ENCODE measurements at regions of chr6 and their contacts with region 1.

Region 1: DNA sequence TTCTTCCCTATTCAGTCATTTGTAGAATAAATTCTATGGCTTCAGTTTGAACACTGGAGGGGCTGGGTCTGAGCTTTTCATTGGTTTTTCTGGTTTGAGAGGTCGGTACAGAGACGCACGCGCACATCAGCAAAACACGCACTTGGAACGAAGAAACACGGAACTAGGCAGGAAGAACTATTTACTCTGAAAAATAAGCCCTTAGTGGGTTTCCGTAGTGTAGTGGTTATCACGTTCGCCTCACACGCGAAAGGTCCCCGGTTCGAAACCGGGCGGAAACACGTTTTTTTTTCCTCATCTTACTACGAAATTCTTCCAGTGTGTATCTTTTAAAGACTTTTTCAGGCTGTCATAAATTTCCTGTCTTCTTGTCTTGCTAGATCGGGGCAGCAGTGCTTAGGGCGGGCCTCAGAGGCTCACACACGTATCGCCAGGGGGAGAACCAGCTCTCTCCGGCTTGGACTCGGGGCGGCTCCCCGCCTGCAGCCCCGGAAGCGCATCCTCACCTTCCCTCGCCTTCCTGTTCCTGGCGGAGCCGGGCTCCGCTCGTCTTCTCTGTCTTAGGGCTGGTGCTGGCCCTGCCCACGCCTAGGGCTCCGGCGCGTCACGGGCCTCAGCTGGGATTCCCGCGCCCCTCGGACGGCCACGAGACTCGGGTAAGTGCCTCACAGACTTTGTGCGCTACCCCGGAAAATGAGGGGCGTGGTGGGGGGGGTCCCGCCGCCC is at the start of gene HMGN4:
- DNase-seq: peak; percentile 66 to 97 (median 76)
- ATAC-seq: peak; percentile 70
- H3K4me3 ChIP-seq: peak within 1 kb of the TSS; percentile 93
- H3K4me3 Mint-ChIP-seq: peak within 1 kb of the TSS; percentile 94
- H3K27ac ChIP-seq: peak within 1 kb of the TSS; percentile 84 to 91
- H3K27ac Mint-ChIP-seq: peak within 1 kb of the TSS; percentile 98
- H3K4me1 ChIP-seq: peaks cover 51% of the 10 kb centered on the region
- H3K4me1 Mint-ChIP-seq: peaks cover 57% of the 10 kb centered on the region
- H3K27me3 ChIP-seq: no peaks in the 10 kb centered on the region
- H3K27me3 Mint-ChIP-seq: peaks cover 13% of the 10 kb centered on the region
- CTCF ChIP-seq: no peak
- total RNA-seq, gene HMGN4: 22.7 to 24.8 TPM

Region 2: GRCh38 chr6:26223650-26224546 is 314.1 kb before region 1 on chr6:
- CTCF ChIA-PET with region 1: no interaction called
- POLR2A ChIA-PET with region 1: interaction called, 11 read pairs
- intact Hi-C with region 1: no loop called
- DNase-seq: peak in 13 of 14 experiments; percentile 45 to 93 (median 60)
- ATAC-seq: peak; percentile 87
- H3K4me3 ChIP-seq: peak overlapping the region; percentile 68
- H3K4me3 Mint-ChIP-seq: no peak overlapping the region
- H3K27ac ChIP-seq: peak overlapping the region; percentile 72 to 82
- H3K27ac Mint-ChIP-seq: no peak overlapping the region
- H3K4me1 ChIP-seq: peaks cover 18% of the 10 kb centered on the region
- H3K4me1 Mint-ChIP-seq: peaks cover 5% of the 10 kb centered on the region
- H3K27me3 ChIP-seq: no peaks in the 10 kb centered on the region
- H3K27me3 Mint-ChIP-seq: no peaks in the 10 kb centered on the region
- CTCF ChIP-seq: no peak

Region 3: DNA sequence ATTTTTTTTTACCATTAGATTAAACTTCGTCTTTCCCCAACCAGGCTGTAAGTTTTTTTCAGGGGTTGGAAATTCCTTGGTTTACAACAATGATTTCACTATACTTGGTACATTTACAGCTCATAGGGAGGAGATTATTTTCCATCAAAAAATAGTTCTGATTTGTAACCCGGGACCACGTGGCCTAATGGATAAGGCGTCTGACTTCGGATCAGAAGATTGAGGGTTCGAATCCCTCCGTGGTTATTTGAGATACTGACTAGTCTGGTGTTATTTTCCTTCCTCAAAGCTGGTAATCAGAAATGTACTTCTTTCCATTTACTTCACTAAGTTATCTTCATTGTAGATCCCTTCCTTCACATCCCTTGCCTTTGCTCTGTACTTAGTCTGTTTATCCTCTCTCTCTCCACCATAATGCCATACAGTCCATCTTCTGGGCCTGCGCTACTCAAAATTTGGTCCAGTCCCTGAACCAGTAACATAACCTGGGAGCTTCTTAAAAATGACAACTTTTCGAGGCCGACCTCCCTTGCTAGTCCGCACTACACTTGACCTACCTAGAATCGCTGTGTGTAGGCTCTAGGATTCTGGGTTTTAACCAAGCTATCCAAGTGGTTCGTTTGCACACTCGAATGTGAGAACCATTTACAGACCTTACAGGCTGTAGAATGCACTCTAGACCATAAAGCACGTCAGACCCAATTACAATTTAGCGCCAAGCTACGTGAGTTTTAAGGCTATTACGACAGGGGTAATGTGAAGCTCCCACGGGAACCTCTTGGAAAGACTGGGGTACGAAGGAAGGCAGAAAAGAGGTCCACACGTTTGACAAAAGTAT is 215.1 kb before region 1 on chr6:
- CTCF ChIA-PET with region 1: interaction called, 3 read pairs
- POLR2A ChIA-PET with region 1: interaction called, 14 read pairs
- intact Hi-C with region 1: no loop called
- DNase-seq: peak in 10 of 14 experiments; percentile 20 to 88 (median 52)
- ATAC-seq: peak; percentile 75
- H3K4me3 ChIP-seq: peak overlapping the region; percentile 54
- H3K4me3 Mint-ChIP-seq: peak overlapping the region; percentile 96
- H3K27ac ChIP-seq: no peak overlapping the region
- H3K27ac Mint-ChIP-seq: peak overlapping the region; percentile 93
- H3K4me1 ChIP-seq: peaks cover 23% of the 10 kb centered on the region
- H3K4me1 Mint-ChIP-seq: peaks cover 30% of the 10 kb centered on the region
- H3K27me3 ChIP-seq: no peaks in the 10 kb centered on the region
- H3K27me3 Mint-ChIP-seq: peaks cover 35% of the 10 kb centered on the region
- CTCF ChIP-seq: no peak

Region 4: DNA sequence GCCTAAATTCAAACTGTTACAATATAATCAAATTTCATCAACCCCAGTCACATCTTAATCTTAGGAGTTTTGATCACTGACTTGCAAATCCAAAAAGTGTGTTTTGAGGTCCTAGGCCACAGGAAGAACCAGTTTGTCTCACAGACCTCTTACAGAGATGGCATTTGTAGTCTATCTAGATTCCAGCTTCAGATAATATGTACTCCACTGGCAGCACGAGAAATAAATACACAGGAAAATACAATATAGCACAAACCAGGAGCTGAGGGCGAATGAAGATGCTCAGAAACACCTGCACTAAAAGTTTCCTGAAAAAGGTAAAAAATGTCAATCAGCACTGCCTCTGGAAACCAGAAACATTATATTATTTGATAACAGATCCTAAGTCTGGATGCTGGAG is 98.4 kb before region 1 on chr6:
- CTCF ChIA-PET with region 1: no interaction called
- POLR2A ChIA-PET with region 1: no interaction called
- intact Hi-C with region 1: loop called in 1 of 2 experiments (anchors 5 kb)
- DNase-seq: peak in 1 of 14 experiments; percentile 50
- ATAC-seq: no peak
- H3K4me3 ChIP-seq: peak overlapping the region; percentile 89
- H3K4me3 Mint-ChIP-seq: peak overlapping the region; percentile 93
- H3K27ac ChIP-seq: peak overlapping the region; percentile 86 to 95
- H3K27ac Mint-ChIP-seq: peak overlapping the region; percentile 99
- H3K4me1 ChIP-seq: peaks cover 28% of the 10 kb centered on the region
- H3K4me1 Mint-ChIP-seq: peaks cover 54% of the 10 kb centered on the region
- H3K27me3 ChIP-seq: no peaks in the 10 kb centered on the region
- H3K27me3 Mint-ChIP-seq: no peaks in the 10 kb centered on the region
- CTCF ChIP-seq: no peak

Region 5: GRCh38 chr6:26553635-26554446 is 15.8 kb after region 1 on chr6:
- CTCF ChIA-PET with region 1: interaction called, 3 read pairs
- POLR2A ChIA-PET with region 1: interaction called, 113 read pairs
- intact Hi-C with region 1: loop called (anchors 1 to 2 kb)
- DNase-seq: peak; percentile 51 to 91 (median 64)
- ATAC-seq: peak; percentile 30
- H3K4me3 ChIP-seq: peak overlapping the region; percentile 60
- H3K4me3 Mint-ChIP-seq: no peak overlapping the region
- H3K27ac ChIP-seq: no peak overlapping the region
- H3K27ac Mint-ChIP-seq: no peak overlapping the region
- H3K4me1 ChIP-seq: peaks cover 33% of the 10 kb centered on the region
- H3K4me1 Mint-ChIP-seq: peaks cover 25% of the 10 kb centered on the region
- H3K27me3 ChIP-seq: no peaks in the 10 kb centered on the region
- H3K27me3 Mint-ChIP-seq: peaks cover 8% of the 10 kb centered on the region
- CTCF ChIP-seq: no peak

Measured in CD4-positive, alpha-beta T cell (primary cell).